K562 (cell line): ENCODE measurements at regions of chr3 and their contacts with region 1.

Region 1: GRCh38 chr3:101069901-101070798 is 76.9 kb upstream of the ABI3BP start:
- DNase-seq: peak; percentile 36 to 79 (median 52)
- ATAC-seq: peak; percentile 99
- H3K4me3 ChIP-seq: no peak overlapping the region
- H3K27ac ChIP-seq: no peak overlapping the region
- H3K4me1 ChIP-seq: no peaks in the 10 kb centered on the region
- H3K27me3 ChIP-seq: no peaks in the 10 kb centered on the region
- CTCF ChIP-seq: peak; percentile 82 to 89 (median 86)
- EP300 ChIP-seq: no peak
- POLR2A ChIP-seq: no peak
- RAD21 ChIP-seq: peak; percentile 73 to 89

Region 2: GRCh38 chr3:101146946-101147345 is 76.8 kb after region 1 on chr3:
- CTCF ChIA-PET with region 1: no interaction called
- POLR2A ChIA-PET with region 1: no interaction called
- in situ Hi-C with region 1: no loop called
- intact Hi-C with region 1: loop called (anchors 2 kb)
- DNase-seq: peak in 3 of 4 experiments; percentile 6 to 45 (median 13)
- ATAC-seq: peak; percentile 83
- H3K4me3 ChIP-seq: no peak overlapping the region
- H3K27ac ChIP-seq: peak overlapping the region; percentile 54; the same call in 2 of the 3 replicates
- H3K4me1 ChIP-seq: peaks cover 0 to 52% of the 10 kb centered on the region in 2 experiments; a peak in 4 of 5 replicates
- H3K27me3 ChIP-seq: no peaks in the 10 kb centered on the region
- CTCF ChIP-seq: no peak
- EP300 ChIP-seq: peak; percentile 93
- POLR2A ChIP-seq: no peak
- RAD21 ChIP-seq: 0 out of 4 replicates have a peak, but pooled peaks of 1 of the 2 experiments have one; percentile 10

Region 3: GRCh38 chr3:101179637-101180036 is 109.5 kb after region 1 on chr3:
- CTCF ChIA-PET with region 1: no interaction called
- POLR2A ChIA-PET with region 1: no interaction called
- in situ Hi-C with region 1: loop called (anchors 10 kb)
- intact Hi-C with region 1: no loop called
- DNase-seq: no peak
- ATAC-seq: no peak
- H3K4me3 ChIP-seq: no peak overlapping the region
- H3K27ac ChIP-seq: no peak overlapping the region
- H3K4me1 ChIP-seq: peaks cover 0 to 3% of the 10 kb centered on the region in 2 experiments; a peak in 2 of 5 replicates
- H3K27me3 ChIP-seq: no peaks in the 10 kb centered on the region
- CTCF ChIP-seq: no peak
- EP300 ChIP-seq: no peak
- POLR2A ChIP-seq: no peak
- RAD21 ChIP-seq: no peak

Region 4: GRCh38 chr3:101195951-101196713 is 126.0 kb after region 1 on chr3:
- CTCF ChIA-PET with region 1: interaction called, 4 read pairs
- POLR2A ChIA-PET with region 1: no interaction called
- in situ Hi-C with region 1: no loop called
- intact Hi-C with region 1: loop called (anchors 1 kb)
- DNase-seq: peak in 2 of 4 experiments; percentile 15 to 43
- ATAC-seq: peak; percentile 72
- H3K4me3 ChIP-seq: no peak overlapping the region
- H3K27ac ChIP-seq: no peak overlapping the region
- H3K4me1 ChIP-seq: no peaks in the 10 kb centered on the region
- H3K27me3 ChIP-seq: no peaks in the 10 kb centered on the region
- CTCF ChIP-seq: peak; percentile 32 to 69 (median 43); a peak in 3 of 6 replicates
- EP300 ChIP-seq: no peak
- POLR2A ChIP-seq: no peak
- RAD21 ChIP-seq: peak; percentile 91 to 96